PC-9 (cell line): ENCODE measurements at regions of chr2 and their contacts with region 1.

Region 1: DNA sequence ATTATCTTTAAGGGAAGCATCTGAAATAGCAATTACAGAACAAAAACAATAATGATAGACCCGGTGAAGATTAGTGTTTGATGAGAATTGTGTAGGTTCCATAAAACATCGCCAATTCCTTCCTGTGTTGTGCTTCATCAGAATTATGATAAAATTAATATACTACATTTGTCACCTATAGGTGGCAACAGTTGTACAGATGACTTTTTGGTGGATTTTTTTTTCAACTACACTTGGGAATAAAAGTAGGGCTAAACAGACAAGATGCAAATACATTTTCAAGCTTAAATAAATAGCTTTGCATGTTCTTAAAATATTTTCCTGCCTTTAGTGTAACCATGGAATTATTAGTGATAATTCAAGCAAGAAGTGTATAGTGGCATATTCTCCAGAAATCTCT is 7.0 kb upstream of the LYPD1 start:
- DNase-seq: no peak
- H3K4me3 ChIP-seq: no peak overlapping the region
- H3K27ac ChIP-seq: no peak overlapping the region
- H3K4me1 ChIP-seq: peaks cover 8% of the 10 kb centered on the region
- H3K27me3 ChIP-seq: no peaks in the 10 kb centered on the region
- CTCF ChIP-seq: peak; percentile 60

Region 2: GRCh38 chr2:132715386-132716351 is 38.7 kb after region 1 on chr2:
- CTCF ChIA-PET with region 1: no interaction called
- POLR2A ChIA-PET with region 1: no interaction called
- intact Hi-C with region 1: loop called (anchors 1 kb)
- DNase-seq: no peak
- H3K4me3 ChIP-seq: no peak overlapping the region
- H3K27ac ChIP-seq: no peak overlapping the region
- H3K4me1 ChIP-seq: no peaks in the 10 kb centered on the region
- H3K27me3 ChIP-seq: no peaks in the 10 kb centered on the region
- CTCF ChIP-seq: no peak